Right ventricle myocardium inferior (tissue), 1 donor: ENCODE measurements at regions of chr10 and their contacts with region 1.

Region 1: DNA sequence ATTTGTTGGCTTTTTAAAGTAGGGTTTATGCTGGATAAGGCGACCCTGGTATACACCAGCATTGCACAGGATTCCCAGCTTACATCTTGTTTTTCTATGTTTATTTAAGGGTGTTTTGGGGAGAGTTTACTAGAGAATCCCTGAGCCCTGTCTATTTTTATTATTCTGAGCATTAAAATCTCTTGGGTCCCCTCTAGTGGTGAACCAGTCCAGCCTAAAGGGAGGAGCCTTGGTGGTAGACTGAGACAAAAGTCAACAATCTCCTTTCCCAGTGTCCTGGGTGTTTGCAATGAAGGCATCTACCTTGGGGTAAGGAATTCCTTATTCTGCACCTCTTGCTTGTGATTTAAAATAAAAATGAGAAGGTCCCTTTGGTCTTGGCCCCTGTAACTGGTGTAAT is 38.2 kb downstream of the ANTXRL start:
- DNase-seq: no peak
- ATAC-seq: peak; percentile 46

Region 2: DNA sequence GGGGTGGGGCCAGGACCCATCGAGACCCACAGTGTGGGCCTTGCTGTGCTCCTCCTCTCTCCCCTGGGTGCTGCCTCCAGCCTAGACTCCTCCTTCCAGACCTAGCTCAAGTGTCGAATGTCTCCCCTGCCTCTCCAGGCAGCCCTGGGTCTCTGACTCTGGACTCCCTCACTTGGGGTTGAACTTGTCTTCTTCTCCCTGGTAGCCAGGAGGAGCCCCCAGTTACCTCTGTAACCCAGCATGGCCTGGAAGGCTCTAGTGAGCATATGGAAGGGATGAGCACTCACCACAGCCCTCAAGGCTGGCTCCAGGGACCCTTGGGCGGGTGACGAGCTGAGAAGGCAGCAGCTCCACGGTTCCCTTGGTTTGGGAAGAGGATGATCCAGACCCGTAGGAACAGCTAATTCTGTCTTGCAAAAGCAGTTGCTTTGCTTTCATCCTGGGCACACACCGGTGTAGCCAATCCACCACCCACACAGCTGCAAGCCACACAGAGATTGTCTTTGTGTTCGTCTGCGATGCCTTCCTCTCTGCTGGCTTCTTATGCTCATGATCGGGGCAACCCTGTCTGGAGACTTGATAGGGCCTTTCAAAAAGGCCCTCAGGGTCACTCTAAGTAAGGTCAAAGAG is 90.5 kb before region 1 on chr10:
- intact Hi-C with region 1: loop called (anchors 10 kb)
- DNase-seq: no peak
- ATAC-seq: no peak